CD8-positive, alpha-beta T cell (primary cell): ENCODE measurements at regions of chr6 and their contacts with region 1.

Region 1: DNA sequence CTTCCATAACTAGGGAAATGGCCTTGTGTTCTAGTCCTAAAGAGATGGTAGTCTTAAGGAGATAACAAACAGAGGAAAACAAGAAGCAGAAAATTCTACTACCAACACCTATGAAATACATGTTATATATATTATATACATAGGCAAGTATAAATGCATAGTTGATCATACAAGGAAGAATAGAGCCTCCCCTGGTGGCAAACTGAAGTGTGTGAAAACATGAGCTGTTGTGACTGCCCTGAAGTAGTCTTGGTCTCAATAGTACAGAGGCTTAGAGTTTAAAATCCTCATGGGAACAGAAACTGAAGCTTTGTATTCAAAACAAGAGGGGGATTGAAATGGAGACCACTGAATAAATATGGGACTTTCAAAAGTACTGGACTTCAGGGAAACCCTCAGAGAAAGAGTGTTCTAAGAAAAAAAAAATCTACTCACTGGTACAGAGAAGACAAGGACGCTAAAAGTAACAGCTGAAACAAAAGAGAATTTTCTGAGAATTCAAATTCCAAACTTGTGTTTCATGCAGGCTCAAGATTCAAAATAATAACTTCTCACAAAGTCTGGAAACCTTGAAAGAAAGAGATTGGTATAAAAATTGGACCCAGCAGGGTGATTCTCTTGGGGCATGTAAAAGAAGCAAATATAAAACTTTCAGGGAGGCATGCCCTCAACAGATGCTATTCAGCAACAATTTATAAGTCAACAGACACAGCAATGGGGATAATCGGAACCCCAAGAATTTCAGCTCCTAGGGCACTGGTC is 59.7 kb upstream of the SAMD3 start:
- DNase-seq: peak in 6 of 9 experiments; percentile 14 to 67 (median 32)
- ATAC-seq: peak; percentile 73
- H3K4me3 ChIP-seq: no peak overlapping the region
- H3K4me3 Mint-ChIP-seq: no peak overlapping the region
- H3K27ac ChIP-seq: no peak overlapping the region
- H3K27ac Mint-ChIP-seq: no peak overlapping the region
- H3K4me1 ChIP-seq: no peaks in the 10 kb centered on the region
- H3K4me1 Mint-ChIP-seq: peaks cover 10% of the 10 kb centered on the region
- H3K27me3 ChIP-seq: no peaks in the 10 kb centered on the region
- H3K27me3 Mint-ChIP-seq: no peaks in the 10 kb centered on the region
- CTCF ChIP-seq: peak; percentile 70

Region 2: DNA sequence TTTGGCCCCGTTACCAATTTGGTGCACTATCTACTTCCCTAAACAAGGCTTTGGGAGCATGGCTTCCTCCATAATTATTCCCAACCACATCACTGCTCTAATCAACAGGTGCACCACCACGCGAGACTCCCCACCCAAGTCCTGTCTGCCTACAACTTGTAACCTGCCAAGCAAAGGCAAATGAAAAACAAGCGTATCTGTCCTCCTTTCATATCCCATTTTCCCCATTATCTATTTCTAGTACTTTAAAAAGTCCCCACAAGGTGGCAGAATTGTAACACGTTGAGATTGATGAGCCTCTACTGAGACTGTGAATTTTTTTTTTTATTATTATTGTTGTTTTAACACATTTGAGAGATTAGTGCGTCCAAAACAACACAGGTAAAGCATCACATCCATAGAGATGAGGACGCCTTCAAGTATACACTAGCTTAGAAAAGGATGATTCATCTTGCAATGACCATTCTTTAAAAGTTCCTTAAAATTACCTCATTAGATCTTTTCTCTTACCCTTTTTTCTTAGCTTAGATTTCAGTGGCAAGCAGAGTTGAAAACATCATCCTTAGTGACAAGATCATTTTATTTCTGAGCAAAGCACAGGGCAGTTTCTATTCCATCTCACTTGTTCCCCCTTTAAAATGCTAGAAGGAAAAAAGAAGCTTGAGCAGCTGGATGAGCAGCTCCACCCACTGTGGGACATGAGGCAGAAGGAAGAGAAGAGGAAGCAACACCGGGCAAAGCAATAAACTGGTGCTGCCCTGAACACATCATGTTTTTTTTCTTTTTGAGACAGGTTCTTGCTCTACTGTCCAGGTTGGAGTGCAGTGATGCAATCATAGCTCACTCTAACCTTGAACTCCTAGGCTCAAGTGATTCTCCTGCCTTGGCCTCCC is 783.2 kb before region 1 on chr6:
- CTCF ChIA-PET with region 1: no interaction called
- POLR2A ChIA-PET with region 1: no interaction called
- intact Hi-C with region 1: loop called in 1 of 2 experiments (anchors 10 kb)
- DNase-seq: peak in 3 of 9 experiments; percentile 22 to 76 (median 67)
- ATAC-seq: peak; percentile 68
- H3K4me3 ChIP-seq: no peak overlapping the region
- H3K4me3 Mint-ChIP-seq: peak overlapping the region; percentile 53
- H3K27ac ChIP-seq: no peak overlapping the region
- H3K27ac Mint-ChIP-seq: no peak overlapping the region
- H3K4me1 ChIP-seq: peaks cover 4% of the 10 kb centered on the region
- H3K4me1 Mint-ChIP-seq: peaks cover 9% of the 10 kb centered on the region
- H3K27me3 ChIP-seq: no peaks in the 10 kb centered on the region
- H3K27me3 Mint-ChIP-seq: no peaks in the 10 kb centered on the region
- CTCF ChIP-seq: peak; percentile 69

Region 3: DNA sequence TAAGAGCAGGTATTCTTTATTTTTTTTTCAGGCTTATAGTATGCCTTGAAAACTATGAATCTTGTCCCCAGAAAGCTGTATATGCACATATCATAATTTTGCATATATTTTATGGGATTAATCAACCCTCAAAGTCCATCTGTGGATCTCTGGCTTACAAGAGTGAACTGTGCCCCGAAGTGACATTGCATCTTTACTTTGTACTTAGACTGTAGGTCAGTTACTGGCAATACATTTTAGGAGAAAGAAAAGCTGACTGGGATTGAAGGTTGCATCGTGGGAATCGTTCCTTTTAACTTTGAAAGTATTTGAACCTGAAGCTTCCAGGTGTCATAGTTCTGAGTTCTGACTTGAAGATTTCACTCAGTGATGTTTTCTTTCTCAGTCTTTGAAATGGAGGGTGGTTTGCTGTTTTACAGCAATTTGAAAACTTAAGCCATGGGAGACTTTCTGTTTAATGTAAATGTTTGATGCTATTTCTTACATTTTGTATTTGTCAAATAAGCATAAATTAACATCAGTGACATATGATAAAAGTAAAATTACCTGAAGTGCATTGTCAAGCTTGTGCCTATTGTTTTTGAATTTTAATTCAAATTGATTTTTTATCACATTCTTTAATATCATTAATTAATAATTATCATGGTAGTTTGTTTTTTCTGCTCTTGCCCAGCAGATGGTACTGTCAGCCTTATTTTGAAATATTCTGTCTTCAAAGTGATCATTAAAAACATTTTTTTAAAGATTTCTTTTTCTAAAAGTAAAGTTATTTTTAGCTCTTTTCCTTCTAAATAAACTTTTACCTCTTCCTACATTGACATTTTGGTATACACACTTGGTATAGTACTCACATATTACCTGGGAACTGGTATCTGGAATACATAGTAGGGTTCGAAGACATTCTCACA is 235.1 kb before region 1 on chr6:
- CTCF ChIA-PET with region 1: interaction called, 3 read pairs
- POLR2A ChIA-PET with region 1: no interaction called
- intact Hi-C with region 1: loop called in 1 of 2 experiments (anchors 2 kb)
- DNase-seq: peak in 1 of 9 experiments; percentile 16
- ATAC-seq: no peak
- H3K4me3 ChIP-seq: no peak overlapping the region
- H3K4me3 Mint-ChIP-seq: no peak overlapping the region
- H3K27ac ChIP-seq: no peak overlapping the region
- H3K27ac Mint-ChIP-seq: no peak overlapping the region
- H3K4me1 ChIP-seq: no peaks in the 10 kb centered on the region
- H3K4me1 Mint-ChIP-seq: peaks cover 20% of the 10 kb centered on the region
- H3K27me3 ChIP-seq: no peaks in the 10 kb centered on the region
- H3K27me3 Mint-ChIP-seq: no peaks in the 10 kb centered on the region
- CTCF ChIP-seq: no peak

Region 4: DNA sequence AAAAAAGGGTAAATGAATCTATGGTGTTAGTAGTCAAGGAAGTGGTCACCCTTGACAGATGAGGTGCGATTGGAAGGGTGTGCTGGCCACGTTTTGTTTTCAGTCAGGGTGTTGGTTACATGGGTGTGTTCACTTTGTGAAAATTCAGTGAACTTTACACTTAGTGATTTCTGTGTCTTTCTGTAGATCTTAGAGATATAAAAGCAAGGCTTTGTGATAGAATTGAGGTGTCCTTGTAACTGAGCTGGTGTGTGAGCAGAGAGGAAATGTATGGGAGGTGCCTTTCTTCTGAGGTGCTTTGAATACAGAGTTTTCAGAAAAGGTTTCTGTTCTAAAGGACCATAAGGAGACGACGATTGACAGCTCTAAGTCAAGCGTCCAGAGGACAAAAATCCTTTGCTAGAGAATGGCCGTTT is 150.1 kb before region 1 on chr6:
- CTCF ChIA-PET with region 1: interaction called, 4 read pairs
- POLR2A ChIA-PET with region 1: interaction called, 4 read pairs
- intact Hi-C with region 1: loop called (anchors 1 to 5 kb)
- DNase-seq: peak; percentile 30 to 89 (median 70)
- ATAC-seq: peak; percentile 85
- H3K4me3 ChIP-seq: peak overlapping the region; percentile 9 to 20
- H3K4me3 Mint-ChIP-seq: peak overlapping the region; percentile 68
- H3K27ac ChIP-seq: peak overlapping the region; percentile 71 to 73
- H3K27ac Mint-ChIP-seq: peak overlapping the region; percentile 93
- H3K4me1 ChIP-seq: peaks cover 61% of the 10 kb centered on the region
- H3K4me1 Mint-ChIP-seq: peaks cover 79% of the 10 kb centered on the region
- H3K27me3 ChIP-seq: no peaks in the 10 kb centered on the region
- H3K27me3 Mint-ChIP-seq: no peaks in the 10 kb centered on the region
- CTCF ChIP-seq: no peak

Region 5: DNA sequence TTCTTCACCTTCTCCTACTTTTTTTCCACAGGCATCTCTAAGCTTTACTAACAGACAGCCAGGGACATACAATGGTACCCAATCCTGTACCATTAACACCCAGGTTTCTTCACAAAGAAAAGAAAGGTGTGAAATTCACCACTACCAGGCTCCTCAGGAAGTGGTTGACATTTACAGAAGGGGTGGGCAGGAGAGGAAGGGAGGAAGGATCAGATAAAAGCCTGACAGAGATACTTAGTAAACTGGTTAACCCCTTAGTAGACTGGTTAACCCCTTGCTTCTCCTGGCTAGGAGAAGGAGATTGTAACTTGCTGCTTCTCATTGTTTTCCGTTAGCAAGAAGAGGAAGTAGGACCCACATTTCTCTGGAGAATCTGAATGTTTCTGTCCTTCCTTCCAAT is 66.9 kb before region 1 on chr6:
- CTCF ChIA-PET with region 1: interaction called, 12 read pairs
- POLR2A ChIA-PET with region 1: interaction called, 7 read pairs
- intact Hi-C with region 1: loop called in 1 of 2 experiments (anchors 5 kb)
- DNase-seq: peak in 8 of 9 experiments; percentile 18 to 88 (median 49)
- ATAC-seq: peak; percentile 85
- H3K4me3 ChIP-seq: peak overlapping the region; percentile 58 to 65
- H3K4me3 Mint-ChIP-seq: peak overlapping the region; percentile 87
- H3K27ac ChIP-seq: peak overlapping the region; percentile 44 to 51
- H3K27ac Mint-ChIP-seq: peak overlapping the region; percentile 85
- H3K4me1 ChIP-seq: peaks cover 37% of the 10 kb centered on the region
- H3K4me1 Mint-ChIP-seq: peaks cover 82% of the 10 kb centered on the region
- H3K27me3 ChIP-seq: no peaks in the 10 kb centered on the region
- H3K27me3 Mint-ChIP-seq: no peaks in the 10 kb centered on the region
- CTCF ChIP-seq: no peak

Region 6: DNA sequence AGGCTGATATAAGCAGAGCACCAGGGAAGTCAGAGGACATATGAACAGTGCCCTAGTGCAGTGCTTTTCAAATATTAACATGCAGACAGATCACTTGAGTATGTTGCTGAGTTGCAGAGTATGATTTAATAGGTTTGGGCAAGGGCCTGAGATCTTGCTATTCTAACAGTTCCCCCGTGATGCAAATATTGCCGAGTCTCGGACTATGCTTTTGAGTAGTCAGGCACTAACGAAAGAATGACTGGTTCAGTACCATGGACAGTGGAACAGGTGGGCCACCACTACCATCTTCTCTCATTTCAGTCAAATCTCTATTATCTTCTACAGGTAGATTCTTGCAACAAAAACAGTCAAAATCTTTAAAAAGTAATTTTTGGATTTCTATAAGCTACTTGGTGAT is 79.7 kb after region 1 on chr6:
- CTCF ChIA-PET with region 1: no interaction called
- POLR2A ChIA-PET with region 1: no interaction called
- intact Hi-C with region 1: no loop called
- DNase-seq: peak in 2 of 9 experiments; percentile 28 to 39
- ATAC-seq: no peak
- H3K4me3 ChIP-seq: no peak overlapping the region
- H3K4me3 Mint-ChIP-seq: no peak overlapping the region
- H3K27ac ChIP-seq: no peak overlapping the region
- H3K27ac Mint-ChIP-seq: no peak overlapping the region
- H3K4me1 ChIP-seq: no peaks in the 10 kb centered on the region
- H3K4me1 Mint-ChIP-seq: peaks cover 14% of the 10 kb centered on the region
- H3K27me3 ChIP-seq: peaks cover 6 to 7% of the 10 kb centered on the region in 2 experiments
- H3K27me3 Mint-ChIP-seq: peaks cover 15% of the 10 kb centered on the region
- CTCF ChIP-seq: no peak